Activated B cell treated with CpG ODN at 0.5 μM for 24 hours (primary cell): ENCODE measurements at regions of chr7 and their contacts with region 1.

Region 1: DNA sequence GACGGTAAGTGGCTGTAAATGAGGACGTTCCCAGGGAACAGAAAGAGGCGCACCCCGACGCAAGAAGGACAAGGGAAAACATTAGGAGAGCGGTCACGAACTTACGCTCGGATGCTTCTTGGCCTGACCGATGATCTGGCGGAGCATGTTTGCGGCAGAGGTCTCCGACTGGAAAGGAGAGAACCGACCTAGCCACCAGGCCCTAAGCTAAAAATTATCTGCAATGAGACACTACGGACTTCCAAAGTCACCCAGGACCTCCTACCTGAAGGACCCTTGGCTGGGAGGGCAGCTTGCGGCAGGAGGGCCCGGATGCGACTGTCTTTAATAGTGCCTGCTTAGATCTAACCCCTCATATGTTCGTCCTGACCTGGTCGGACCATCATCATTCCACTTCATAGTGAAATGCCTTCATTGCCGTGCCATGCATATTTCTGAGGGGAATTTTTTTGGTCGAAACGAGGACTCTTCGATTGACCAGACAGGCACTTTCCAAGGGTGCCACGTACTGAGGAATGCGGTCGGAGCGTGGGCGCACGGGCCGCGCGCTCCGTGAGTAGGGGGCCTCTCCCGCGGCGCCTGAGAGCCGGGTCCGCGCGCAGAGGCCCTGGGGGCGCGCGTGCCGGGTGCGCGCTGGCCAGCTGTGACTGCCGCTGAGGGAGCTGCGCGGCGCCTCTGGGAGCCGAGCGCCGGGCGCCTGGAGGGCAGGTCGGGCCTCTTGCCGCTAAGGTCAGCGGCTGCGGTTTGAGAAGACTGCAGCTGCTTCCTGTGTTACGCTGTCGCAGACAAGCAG is 33.6 kb upstream of the PHF14 start:
- DNase-seq: peak; percentile 93
- ATAC-seq: peak; percentile 91
- H3K4me3 Mint-ChIP-seq: no peak overlapping the region
- H3K27ac Mint-ChIP-seq: no peak overlapping the region
- H3K4me1 Mint-ChIP-seq: peaks cover 5% of the 10 kb centered on the region
- H3K27me3 Mint-ChIP-seq: no peaks in the 10 kb centered on the region
- CTCF ChIP-seq: no peak

Region 2: DNA sequence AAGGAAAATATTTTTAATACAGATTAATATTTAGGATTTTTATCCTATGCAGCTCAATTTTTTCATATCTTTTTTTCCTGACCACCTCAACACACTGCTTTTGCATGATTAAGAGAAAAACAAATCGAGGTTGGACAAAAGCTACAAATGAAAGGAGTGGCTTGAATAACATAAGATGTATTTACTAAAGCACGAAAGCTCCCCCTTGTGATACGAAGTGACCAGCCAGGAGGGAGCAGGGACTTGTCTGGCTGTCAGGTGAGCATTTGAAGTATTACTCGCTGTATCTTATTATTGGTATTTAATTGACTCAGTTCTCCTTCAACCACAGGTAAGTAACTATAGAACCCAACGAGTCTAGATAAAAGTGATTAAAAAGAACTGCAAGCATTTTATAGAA is 231.7 kb before region 1 on chr7:
- CTCF ChIA-PET with region 1: no interaction called
- POLR2A ChIA-PET with region 1: no interaction called
- intact Hi-C with region 1: loop called (anchors 5 kb)
- DNase-seq: no peak
- ATAC-seq: no peak
- H3K4me3 Mint-ChIP-seq: no peak overlapping the region
- H3K27ac Mint-ChIP-seq: no peak overlapping the region
- H3K4me1 Mint-ChIP-seq: peaks cover 8% of the 10 kb centered on the region
- H3K27me3 Mint-ChIP-seq: no peaks in the 10 kb centered on the region
- CTCF ChIP-seq: no peak

Region 3: DNA sequence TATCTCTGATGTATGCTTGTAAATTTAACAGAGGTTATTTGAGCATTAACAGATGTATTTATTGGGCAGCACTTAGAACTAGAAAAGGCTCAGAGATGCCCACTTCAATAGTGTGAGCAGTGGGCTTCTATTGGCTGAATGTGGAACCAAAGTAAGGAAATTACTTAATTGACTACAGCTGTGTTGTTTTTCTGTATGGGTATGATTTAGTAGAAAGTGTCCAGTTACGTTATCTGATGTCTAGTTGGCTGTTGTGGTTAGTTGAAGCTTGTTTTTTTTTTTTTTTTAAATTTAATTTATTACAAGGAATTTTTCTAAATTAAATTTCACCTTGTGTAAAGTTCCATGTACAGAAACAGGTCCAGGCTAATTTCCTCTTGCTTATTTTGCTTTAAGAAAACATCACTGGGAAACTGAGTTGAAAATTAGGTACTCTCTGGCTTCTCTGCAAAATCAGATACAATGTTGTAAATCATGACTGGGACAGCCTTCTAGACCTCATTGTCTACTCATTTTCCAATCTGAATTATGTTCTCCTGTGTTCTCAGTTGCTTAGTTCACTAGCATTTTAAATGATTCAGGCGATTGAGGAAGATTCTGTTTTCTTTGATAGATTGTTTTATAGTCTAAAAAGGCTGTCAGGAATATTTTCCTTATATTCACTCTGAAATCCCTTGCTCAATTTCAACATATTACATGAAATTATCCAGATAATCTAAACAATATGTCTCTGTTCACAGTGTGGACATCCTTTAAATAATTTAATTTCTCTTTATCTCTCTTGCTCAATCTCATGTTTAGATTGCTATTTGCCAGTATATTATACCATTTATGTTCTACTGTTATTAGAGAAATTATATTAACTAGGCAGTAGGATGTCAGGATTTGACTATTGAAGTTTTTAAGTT is 86.6 kb after region 1 on chr7:
- CTCF ChIA-PET with region 1: no interaction called
- POLR2A ChIA-PET with region 1: no interaction called
- intact Hi-C with region 1: loop called (anchors 5 kb)
- DNase-seq: no peak
- ATAC-seq: no peak
- H3K4me3 Mint-ChIP-seq: no peak overlapping the region
- H3K27ac Mint-ChIP-seq: no peak overlapping the region
- H3K4me1 Mint-ChIP-seq: no peaks in the 10 kb centered on the region
- H3K27me3 Mint-ChIP-seq: no peaks in the 10 kb centered on the region
- CTCF ChIP-seq: no peak

Region 4: GRCh38 chr7:11343818-11344413 is 403.8 kb after region 1 on chr7:
- CTCF ChIA-PET with region 1: no interaction called
- POLR2A ChIA-PET with region 1: no interaction called
- intact Hi-C with region 1: loop called (anchors 10 kb)
- DNase-seq: no peak
- ATAC-seq: no peak
- H3K4me3 Mint-ChIP-seq: no peak overlapping the region
- H3K27ac Mint-ChIP-seq: no peak overlapping the region
- H3K4me1 Mint-ChIP-seq: no peaks in the 10 kb centered on the region
- H3K27me3 Mint-ChIP-seq: peaks cover 3% of the 10 kb centered on the region
- CTCF ChIP-seq: peak; percentile 86

Region 5: DNA sequence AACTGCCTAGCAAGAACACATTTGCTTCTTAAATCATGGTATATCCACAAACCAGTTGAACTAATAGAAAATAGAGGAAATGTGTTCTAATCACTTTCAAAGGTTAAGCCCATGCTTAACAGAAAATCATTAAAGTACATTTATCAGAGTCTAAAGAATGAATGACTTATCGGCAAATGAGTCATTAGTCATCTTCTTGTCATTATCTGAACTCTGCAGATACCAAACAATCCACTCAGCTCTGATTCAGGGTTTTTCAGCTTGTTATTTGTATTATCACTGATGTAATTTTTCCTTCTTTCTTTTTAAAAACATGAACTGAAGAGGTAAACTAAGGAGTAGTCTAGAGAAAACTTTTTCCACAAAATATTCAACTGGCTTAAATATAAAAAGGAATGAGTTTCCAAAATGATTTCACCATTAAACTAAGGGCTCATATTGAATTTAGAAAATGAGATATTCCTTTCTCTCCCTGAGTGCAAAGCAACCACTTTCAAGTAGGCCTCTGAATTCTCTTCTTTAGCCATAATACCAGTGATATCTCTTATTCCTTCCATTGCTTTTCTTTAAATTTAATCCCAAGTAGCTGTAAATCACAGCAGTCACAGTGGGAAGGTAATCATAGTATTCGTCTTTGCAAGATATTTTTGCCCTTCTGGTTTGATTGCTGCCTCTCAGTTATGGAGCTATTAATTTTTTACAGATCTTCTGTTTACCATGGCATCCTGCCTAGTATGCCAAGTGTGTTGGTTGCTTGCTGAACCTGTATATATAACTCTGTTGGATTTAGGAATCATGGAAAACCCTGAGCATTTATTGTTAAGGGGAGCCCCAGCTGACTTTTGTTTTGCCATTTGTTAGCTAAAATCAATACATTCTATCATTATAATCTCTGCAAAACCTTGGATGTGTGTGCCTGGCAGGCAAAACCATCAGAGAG is 766.8 kb after region 1 on chr7:
- CTCF ChIA-PET with region 1: no interaction called
- POLR2A ChIA-PET with region 1: no interaction called
- intact Hi-C with region 1: no loop called
- DNase-seq: no peak
- ATAC-seq: no peak
- H3K4me3 Mint-ChIP-seq: no peak overlapping the region
- H3K27ac Mint-ChIP-seq: no peak overlapping the region
- H3K4me1 Mint-ChIP-seq: no peaks in the 10 kb centered on the region
- H3K27me3 Mint-ChIP-seq: no peaks in the 10 kb centered on the region
- CTCF ChIP-seq: no peak

Region 6: DNA sequence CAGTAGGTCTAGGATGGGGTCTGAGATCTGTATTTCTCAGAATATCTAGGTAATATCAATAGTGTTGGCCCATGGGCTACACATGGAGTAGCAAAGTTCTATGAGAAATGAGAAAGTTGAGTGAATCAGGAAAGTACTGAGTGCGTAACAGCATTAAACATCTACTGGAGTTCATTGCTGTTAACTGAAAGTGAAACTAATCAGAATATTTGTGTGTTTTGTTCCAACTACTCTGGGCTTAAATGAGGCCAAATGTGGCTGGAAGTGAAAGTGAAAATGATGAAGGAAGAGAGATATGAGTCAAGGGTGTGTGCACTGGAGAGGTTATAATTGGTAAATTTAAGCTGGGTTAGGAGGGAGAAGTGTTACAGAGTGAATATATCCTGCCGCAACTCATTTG is 1317.5 kb after region 1 on chr7:
- CTCF ChIA-PET with region 1: no interaction called
- POLR2A ChIA-PET with region 1: no interaction called
- intact Hi-C with region 1: loop called (anchors 1 kb)
- DNase-seq: no peak
- ATAC-seq: peak; percentile 96
- H3K4me3 Mint-ChIP-seq: no peak overlapping the region
- H3K27ac Mint-ChIP-seq: no peak overlapping the region
- H3K4me1 Mint-ChIP-seq: no peaks in the 10 kb centered on the region
- H3K27me3 Mint-ChIP-seq: no peaks in the 10 kb centered on the region
- CTCF ChIP-seq: no peak